ENCODE measurements at regions of chr2 and their contacts with region 1.

Region 1: GRCh38 chr2:168118733-168119514 is 128.5 kb downstream of the STK39 start:
- DNase-seq: peak; percentile 17
- H3K4me3 ChIP-seq: no peak overlapping the region; a peak in 1 of 4 replicates
- H3K27ac ChIP-seq: peak overlapping the region; percentile 9 to 67; a peak in 2 of 4 replicates
- H3K4me1 ChIP-seq: peaks cover 0 to 8% of the 10 kb centered on the region in 2 experiments; a peak in 2 of 4 replicates
- H3K27me3 ChIP-seq: no peaks in the 10 kb centered on the region
- CTCF ChIP-seq: peak; percentile 89
- EP300 ChIP-seq: no peak
- RAD21 ChIP-seq: peak; percentile 88

Region 2: DNA sequence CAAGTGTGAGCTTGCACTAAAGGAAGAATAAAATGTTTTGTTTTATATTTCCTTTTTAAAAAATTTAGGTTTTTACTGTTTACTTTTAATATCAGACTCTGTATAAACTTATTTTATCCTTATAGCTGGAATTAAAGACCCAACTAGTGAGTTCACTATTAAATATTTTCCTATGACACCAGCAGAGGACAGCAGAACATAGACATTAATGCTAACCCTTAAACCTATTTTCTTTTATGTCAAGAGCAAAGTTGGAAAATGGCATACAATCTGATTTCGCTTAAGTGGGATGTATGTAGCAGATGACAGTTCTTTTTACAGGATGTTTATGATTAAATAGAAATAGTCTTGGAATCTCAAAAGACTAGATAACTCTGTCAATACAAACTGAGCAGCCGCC is 1418.8 kb before region 1 on chr2:
- CTCF ChIA-PET with region 1: interaction called, 37 read pairs
- POLR2A ChIA-PET with region 1: no interaction called
- DNase-seq: peak; percentile 11
- H3K4me3 ChIP-seq: no peak overlapping the region
- H3K27ac ChIP-seq: no peak overlapping the region
- H3K4me1 ChIP-seq: no peaks in the 10 kb centered on the region
- H3K27me3 ChIP-seq: no peaks in the 10 kb centered on the region
- CTCF ChIP-seq: peak; percentile 55
- EP300 ChIP-seq: no peak
- RAD21 ChIP-seq: peak; percentile 79

Region 3: GRCh38 chr2:167342769-167343168 is 776.2 kb before region 1 on chr2:
- CTCF ChIA-PET with region 1: interaction called, 35 read pairs
- POLR2A ChIA-PET with region 1: no interaction called
- DNase-seq: peak; percentile 14
- H3K4me3 ChIP-seq: no peak overlapping the region
- H3K27ac ChIP-seq: no peak overlapping the region
- H3K4me1 ChIP-seq: no peaks in the 10 kb centered on the region; a peak in 1 of 4 replicates
- H3K27me3 ChIP-seq: no peaks in the 10 kb centered on the region
- CTCF ChIP-seq: peak; percentile 32
- EP300 ChIP-seq: no peak
- RAD21 ChIP-seq: peak; percentile 63

Region 4: DNA sequence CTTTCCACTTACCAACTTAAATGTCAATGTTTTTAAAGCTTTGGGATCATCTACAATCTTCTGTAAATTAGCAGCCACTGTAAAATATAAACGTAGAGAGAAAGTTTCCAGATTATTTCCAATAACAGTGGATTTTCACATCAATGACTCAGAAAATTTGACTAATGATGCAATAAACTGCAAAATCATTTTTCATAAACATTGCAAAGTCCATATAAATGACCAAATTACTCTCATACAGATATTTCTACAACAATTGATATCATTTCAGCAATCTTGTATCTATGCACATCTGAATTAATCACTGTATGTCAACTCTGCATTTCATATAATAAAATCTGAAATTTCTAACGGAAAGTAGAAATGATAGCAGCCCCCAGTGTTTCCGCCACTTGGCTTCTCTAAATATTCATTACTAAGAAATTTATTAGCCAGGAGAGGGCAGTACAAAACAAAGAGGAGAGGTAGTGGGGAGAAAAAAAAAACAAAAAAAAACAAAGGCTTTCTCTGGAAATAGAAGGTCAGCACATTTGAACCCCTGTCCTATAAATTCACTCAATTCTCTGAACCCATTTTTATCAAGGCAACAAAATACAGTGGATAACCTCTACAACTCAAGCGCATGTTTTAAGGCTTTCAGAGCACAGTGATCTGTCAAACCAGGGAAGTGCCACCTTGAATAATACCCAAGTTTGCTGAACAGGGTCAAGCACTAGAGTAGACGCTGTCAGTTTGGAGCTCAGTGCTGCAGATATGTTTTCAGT is 154.1 kb before region 1 on chr2:
- CTCF ChIA-PET with region 1: interaction called, 60 read pairs
- POLR2A ChIA-PET with region 1: no interaction called
- DNase-seq: peak; percentile 22
- H3K4me3 ChIP-seq: no peak overlapping the region
- H3K27ac ChIP-seq: peak overlapping the region in 1 of 2 experiments; percentile 62; a peak in 2 of 4 replicates
- H3K4me1 ChIP-seq: peaks cover 0 to 26% of the 10 kb centered on the region in 2 experiments; a peak in 2 of 4 replicates
- H3K27me3 ChIP-seq: no peaks in the 10 kb centered on the region
- CTCF ChIP-seq: peak; percentile 59
- EP300 ChIP-seq: no peak
- RAD21 ChIP-seq: peak; percentile 74

Region 5: DNA sequence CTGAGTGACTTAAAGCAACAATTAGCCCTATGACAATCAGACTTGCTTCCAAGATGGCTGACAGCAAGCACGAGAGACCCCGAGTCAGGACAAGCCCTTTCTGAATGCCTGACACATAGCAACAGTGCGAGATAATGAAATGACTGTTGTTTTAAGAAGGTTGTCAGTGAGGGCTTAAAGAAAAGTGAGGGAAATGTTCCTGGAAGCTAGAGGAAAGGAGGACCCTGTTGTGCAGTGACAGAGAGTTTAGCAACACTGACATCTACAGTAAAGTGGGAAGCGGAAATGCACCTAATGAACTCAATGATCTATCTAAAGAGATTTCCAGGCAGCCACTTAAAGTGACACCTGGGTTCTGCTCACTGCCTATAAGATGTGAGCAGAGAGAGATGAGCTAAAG is 34.6 kb before region 1 on chr2:
- CTCF ChIA-PET with region 1: interaction called, 13 read pairs
- POLR2A ChIA-PET with region 1: no interaction called
- DNase-seq: no peak
- H3K4me3 ChIP-seq: no peak overlapping the region
- H3K27ac ChIP-seq: no peak overlapping the region
- H3K4me1 ChIP-seq: peaks cover 0 to 4% of the 10 kb centered on the region in 2 experiments; a peak in 2 of 4 replicates
- H3K27me3 ChIP-seq: no peaks in the 10 kb centered on the region
- CTCF ChIP-seq: no peak
- EP300 ChIP-seq: no peak
- RAD21 ChIP-seq: peak; percentile 42

Region 6: DNA sequence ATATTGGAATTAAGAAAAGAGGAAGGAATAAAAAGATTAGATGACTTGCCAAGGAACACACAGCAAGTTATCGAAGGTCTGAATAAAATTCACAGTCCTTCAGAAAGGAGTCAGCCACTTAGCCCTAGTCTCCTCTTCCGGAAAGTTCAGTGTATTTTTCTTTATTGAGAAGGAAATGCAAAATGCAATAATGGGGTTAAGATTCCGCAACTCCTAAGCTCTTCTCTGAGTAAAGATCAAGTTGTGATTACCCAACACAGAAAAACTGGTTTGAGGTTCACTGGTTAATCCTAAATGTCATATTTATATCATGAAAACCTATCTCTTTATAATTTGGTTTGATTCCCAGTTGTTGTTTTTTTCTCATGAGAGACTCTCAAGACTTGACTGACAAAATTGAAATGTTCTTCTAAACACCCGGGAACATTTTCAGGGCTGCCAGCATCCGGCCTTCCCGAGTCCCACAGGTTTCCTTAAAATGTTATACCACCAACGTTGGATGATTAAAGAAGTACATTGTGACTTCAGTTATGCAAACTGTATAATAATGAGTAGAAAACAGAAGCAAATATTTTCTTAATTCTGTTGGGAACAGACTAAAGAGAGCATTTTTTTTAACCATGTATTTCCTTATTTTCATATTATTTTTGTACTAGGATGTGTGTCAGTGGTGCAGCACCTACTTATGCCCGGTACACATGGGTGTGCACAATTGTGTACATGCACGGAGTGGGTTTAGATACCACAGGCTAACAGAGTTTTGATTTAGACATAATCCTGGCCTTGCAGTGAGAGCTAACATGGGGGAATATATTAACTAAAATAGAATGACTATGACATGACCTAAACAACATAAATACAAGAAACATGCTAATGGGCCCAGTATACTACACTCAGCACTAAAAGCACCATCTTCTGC is 28.2 kb after region 1 on chr2:
- CTCF ChIA-PET with region 1: interaction called, 10 read pairs
- POLR2A ChIA-PET with region 1: no interaction called
- DNase-seq: no peak
- H3K4me3 ChIP-seq: no peak overlapping the region
- H3K27ac ChIP-seq: peak overlapping the region; percentile 29 to 92; a peak in 3 of 4 replicates
- H3K4me1 ChIP-seq: peaks cover 0 to 25% of the 10 kb centered on the region in 2 experiments; a peak in 3 of 4 replicates
- H3K27me3 ChIP-seq: no peaks in the 10 kb centered on the region
- CTCF ChIP-seq: no peak
- EP300 ChIP-seq: no peak
- RAD21 ChIP-seq: no peak